CD8-positive, alpha-beta T cell (primary cell): ENCODE measurements at regions of chr15 and their contacts with region 1.

Region 1: GRCh38 chr15:64162870-64163658 is at the start of gene PPIB:
- DNase-seq: peak; percentile 93 to 98 (median 96)
- ATAC-seq: peak; percentile 93
- H3K4me3 ChIP-seq: peak within 1 kb of the TSS; percentile 88 to 92
- H3K4me3 Mint-ChIP-seq: peak within 1 kb of the TSS; percentile 90
- H3K27ac ChIP-seq: peak within 1 kb of the TSS; percentile 79 to 88
- H3K27ac Mint-ChIP-seq: peak within 1 kb of the TSS; percentile 87
- H3K4me1 ChIP-seq: peaks cover 38% of the 10 kb centered on the region
- H3K4me1 Mint-ChIP-seq: peaks cover 41% of the 10 kb centered on the region
- H3K27me3 ChIP-seq: no peaks in the 10 kb centered on the region
- H3K27me3 Mint-ChIP-seq: no peaks in the 10 kb centered on the region
- CTCF ChIP-seq: no peak
- total RNA-seq, gene PPIB: 148 to 156 TPM

Region 2: DNA sequence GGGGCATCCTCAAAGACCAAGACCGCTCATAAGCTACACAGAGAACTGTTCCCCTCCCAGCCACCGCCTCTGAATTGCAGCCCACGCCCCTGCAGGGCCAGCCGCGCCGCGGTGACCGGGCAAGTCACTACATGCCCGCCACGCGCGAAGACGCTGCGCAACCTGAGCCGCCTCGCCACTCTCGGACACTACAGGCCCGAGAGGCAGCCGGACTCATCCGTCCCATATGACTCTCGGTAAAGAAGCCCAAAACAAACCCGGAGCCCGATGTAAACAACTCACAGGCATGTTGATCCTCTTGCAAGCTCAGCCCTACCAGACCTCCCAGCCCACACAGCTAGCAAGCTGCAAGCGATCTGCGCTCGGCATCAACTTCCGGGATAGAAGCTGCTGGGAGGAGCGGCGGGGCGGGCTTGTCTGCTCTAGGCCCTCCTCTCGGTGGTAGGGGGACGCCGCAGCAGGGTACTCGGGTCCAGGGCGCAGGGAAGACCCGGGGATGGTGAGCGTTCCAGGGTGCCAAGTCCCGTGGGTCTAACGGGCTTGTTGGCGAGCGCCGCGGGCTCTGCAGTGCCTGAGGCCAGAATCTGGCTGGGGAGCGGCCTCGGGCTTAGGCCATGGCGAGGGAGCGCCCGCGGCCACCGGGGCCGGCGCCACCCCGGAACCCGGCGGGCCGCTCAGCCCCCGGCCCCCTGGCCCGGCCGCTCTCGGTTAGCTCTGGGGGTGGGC is 1005.8 kb before region 1 on chr15 and contains the start of gene RPS27L:
- CTCF ChIA-PET with region 1: no interaction called
- POLR2A ChIA-PET with region 1: no interaction called
- intact Hi-C with region 1: loop called in 1 of 2 experiments (anchors 5 kb)
- DNase-seq: peak; percentile 65 to 91 (median 88)
- ATAC-seq: peak; percentile 96
- H3K4me3 ChIP-seq: peak within 1 kb of the TSS; percentile 94 to 96
- H3K4me3 Mint-ChIP-seq: peak within 1 kb of the TSS; percentile 100
- H3K27ac ChIP-seq: peak within 1 kb of the TSS; percentile 75 to 78
- H3K27ac Mint-ChIP-seq: peak within 1 kb of the TSS; percentile 97
- H3K4me1 ChIP-seq: peaks cover 18% of the 10 kb centered on the region
- H3K4me1 Mint-ChIP-seq: peaks cover 26% of the 10 kb centered on the region
- H3K27me3 ChIP-seq: no peaks in the 10 kb centered on the region
- H3K27me3 Mint-ChIP-seq: no peaks in the 10 kb centered on the region
- CTCF ChIP-seq: no peak
- total RNA-seq, gene RPS27L: 40.3 to 45.9 TPM

Region 3: DNA sequence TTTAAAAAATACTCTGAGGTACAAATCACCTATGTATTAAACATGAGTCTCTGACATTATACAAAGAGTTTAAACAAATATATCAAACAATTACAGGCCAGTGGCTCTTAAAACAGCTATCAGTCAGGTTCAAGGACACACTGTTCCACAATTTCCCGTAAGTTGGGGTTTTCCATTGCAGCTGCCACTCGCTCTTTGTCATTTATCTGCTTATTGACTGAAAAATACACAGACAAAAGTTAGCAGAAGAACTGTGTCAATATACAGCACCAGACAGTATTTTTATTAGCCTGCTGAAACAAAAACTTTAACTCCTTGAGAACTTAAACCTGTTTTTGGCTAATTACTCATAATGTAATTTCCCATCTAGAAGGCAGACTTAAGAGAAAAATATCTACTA is 90.3 kb before region 1 on chr15:
- CTCF ChIA-PET with region 1: no interaction called
- POLR2A ChIA-PET with region 1: no interaction called
- intact Hi-C with region 1: no loop called
- DNase-seq: no peak
- ATAC-seq: no peak
- H3K4me3 ChIP-seq: no peak overlapping the region
- H3K4me3 Mint-ChIP-seq: no peak overlapping the region
- H3K27ac ChIP-seq: no peak overlapping the region
- H3K27ac Mint-ChIP-seq: peak overlapping the region; percentile 52
- H3K4me1 ChIP-seq: no peaks in the 10 kb centered on the region
- H3K4me1 Mint-ChIP-seq: peaks cover 10% of the 10 kb centered on the region
- H3K27me3 ChIP-seq: no peaks in the 10 kb centered on the region
- H3K27me3 Mint-ChIP-seq: no peaks in the 10 kb centered on the region
- CTCF ChIP-seq: no peak

Region 4: DNA sequence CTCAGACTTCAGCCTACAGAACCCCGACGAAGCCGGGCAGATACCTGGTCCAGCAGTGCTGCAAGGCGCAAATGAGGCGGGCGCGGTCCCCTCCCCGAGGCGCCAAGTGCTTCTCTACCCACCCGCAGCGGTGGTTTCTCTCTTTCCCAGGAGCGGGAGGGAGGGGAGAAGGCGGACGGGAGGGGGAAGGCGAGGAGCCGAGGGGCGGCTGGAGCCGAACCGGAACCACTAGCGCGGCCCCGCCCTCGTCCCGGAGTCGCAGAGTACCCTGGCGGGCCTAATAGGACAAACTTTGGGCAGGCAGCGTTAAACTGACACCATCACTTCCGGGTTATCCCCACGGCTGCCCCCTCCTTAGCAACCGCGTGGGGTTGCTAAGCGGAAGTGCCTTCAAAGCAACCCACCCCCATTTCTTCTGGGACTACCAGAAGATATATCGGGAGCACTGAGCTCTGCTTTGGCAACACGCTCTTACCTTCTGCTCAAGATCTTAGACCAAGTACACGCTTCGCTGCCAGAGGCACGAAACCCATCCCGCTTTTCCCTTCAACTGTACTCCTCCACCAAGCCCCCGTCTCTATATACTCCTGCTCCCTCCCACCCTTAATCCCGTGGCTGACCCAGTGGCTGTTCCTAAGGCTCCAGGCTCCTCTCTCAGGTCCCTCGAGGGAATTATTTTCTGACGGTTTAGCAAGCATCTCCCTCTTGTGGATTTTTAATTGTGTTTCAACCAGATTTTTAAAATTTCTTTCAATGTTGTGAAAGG is 193.1 kb after region 1 on chr15 and contains the start of gene CSNK1G1:
- CTCF ChIA-PET with region 1: no interaction called
- POLR2A ChIA-PET with region 1: no interaction called
- intact Hi-C with region 1: loop called (anchors 1 kb)
- DNase-seq: peak; percentile 77 to 97 (median 92)
- ATAC-seq: peak; percentile 96
- H3K4me3 ChIP-seq: peak within 1 kb of the TSS; percentile 86 to 91
- H3K4me3 Mint-ChIP-seq: peak within 1 kb of the TSS; percentile 94
- H3K27ac ChIP-seq: peak within 1 kb of the TSS; percentile 67 to 74
- H3K27ac Mint-ChIP-seq: peak within 1 kb of the TSS; percentile 89
- H3K4me1 ChIP-seq: peaks cover 9% of the 10 kb centered on the region
- H3K4me1 Mint-ChIP-seq: peaks cover 18% of the 10 kb centered on the region
- H3K27me3 ChIP-seq: no peaks in the 10 kb centered on the region
- H3K27me3 Mint-ChIP-seq: no peaks in the 10 kb centered on the region
- CTCF ChIP-seq: peak; percentile 43
- total RNA-seq, gene CSNK1G1: 10.0 to 12.9 TPM

Region 5: GRCh38 chr15:64387562-64388168 is 224.6 kb after region 1 on chr15 and contains the start of gene TRIP4:
- CTCF ChIA-PET with region 1: no interaction called
- POLR2A ChIA-PET with region 1: interaction called, 20 read pairs
- intact Hi-C with region 1: loop called (anchors 1 kb)
- DNase-seq: peak; percentile 93 to 98 (median 96)
- ATAC-seq: peak; percentile 99
- H3K4me3 ChIP-seq: peak within 1 kb of the TSS; percentile 86 to 98
- H3K4me3 Mint-ChIP-seq: peak within 1 kb of the TSS; percentile 99
- H3K27ac ChIP-seq: peak within 1 kb of the TSS; percentile 51 to 69
- H3K27ac Mint-ChIP-seq: peak within 1 kb of the TSS; percentile 97
- H3K4me1 ChIP-seq: peaks cover 19% of the 10 kb centered on the region
- H3K4me1 Mint-ChIP-seq: peaks cover 21% of the 10 kb centered on the region
- H3K27me3 ChIP-seq: no peaks in the 10 kb centered on the region
- H3K27me3 Mint-ChIP-seq: no peaks in the 10 kb centered on the region
- CTCF ChIP-seq: no peak
- total RNA-seq, gene TRIP4: 10.7 to 11.2 TPM

Region 6: GRCh38 chr15:64825431-64826294 is 662.6 kb after region 1 on chr15 and contains the start of gene PIF1:
- CTCF ChIA-PET with region 1: no interaction called
- POLR2A ChIA-PET with region 1: no interaction called
- intact Hi-C with region 1: loop called in 1 of 2 experiments (anchors 5 kb)
- DNase-seq: peak; percentile 67 to 97 (median 84)
- ATAC-seq: peak; percentile 97
- H3K4me3 ChIP-seq: peak within 1 kb of the TSS; percentile 41 to 47
- H3K4me3 Mint-ChIP-seq: peak within 1 kb of the TSS; percentile 88
- H3K27ac ChIP-seq: peak within 1 kb of the TSS in 1 of 2 experiments; percentile 64
- H3K27ac Mint-ChIP-seq: peak within 1 kb of the TSS; percentile 70
- H3K4me1 ChIP-seq: peaks cover 23% of the 10 kb centered on the region
- H3K4me1 Mint-ChIP-seq: peaks cover 32% of the 10 kb centered on the region
- H3K27me3 ChIP-seq: no peaks in the 10 kb centered on the region
- H3K27me3 Mint-ChIP-seq: peaks cover 14% of the 10 kb centered on the region
- CTCF ChIP-seq: no peak
- total RNA-seq, gene PIF1: 0.50 to 0.76 TPM